Dendritic cell treated with granulocyte-macrophage colony-stimulating factor and Interleukin-4, amounts not matched to agents 40 ng/mL and 50 ng/mL, for 4 days (primary cell): ENCODE measurements at regions of chr15 and their contacts with region 1.

Region 1: GRCh38 chr15:63668601-63669000 is 71.4 kb downstream of the FBXL22 start:
- H3K4me3 Mint-ChIP-seq: peak overlapping the region; percentile 53
- H3K27ac Mint-ChIP-seq: peak overlapping the region; percentile 81
- H3K4me1 Mint-ChIP-seq: peaks cover 17% of the 10 kb centered on the region
- H3K27me3 Mint-ChIP-seq: no peaks in the 10 kb centered on the region

Region 2: GRCh38 chr15:63107895-63108546 is 560.6 kb before region 1 on chr15:
- intact Hi-C with region 1: no loop called
- H3K4me3 Mint-ChIP-seq: no peak overlapping the region
- H3K27ac Mint-ChIP-seq: no peak overlapping the region
- H3K4me1 Mint-ChIP-seq: peaks cover 27% of the 10 kb centered on the region
- H3K27me3 Mint-ChIP-seq: peaks cover 4% of the 10 kb centered on the region

Region 3: GRCh38 chr15:63729115-63729884 is 60.7 kb after region 1 on chr15:
- intact Hi-C with region 1: loop called (anchors 10 kb)
- H3K4me3 Mint-ChIP-seq: no peak overlapping the region
- H3K27ac Mint-ChIP-seq: no peak overlapping the region
- H3K4me1 Mint-ChIP-seq: no peaks in the 10 kb centered on the region
- H3K27me3 Mint-ChIP-seq: no peaks in the 10 kb centered on the region

Region 4: DNA sequence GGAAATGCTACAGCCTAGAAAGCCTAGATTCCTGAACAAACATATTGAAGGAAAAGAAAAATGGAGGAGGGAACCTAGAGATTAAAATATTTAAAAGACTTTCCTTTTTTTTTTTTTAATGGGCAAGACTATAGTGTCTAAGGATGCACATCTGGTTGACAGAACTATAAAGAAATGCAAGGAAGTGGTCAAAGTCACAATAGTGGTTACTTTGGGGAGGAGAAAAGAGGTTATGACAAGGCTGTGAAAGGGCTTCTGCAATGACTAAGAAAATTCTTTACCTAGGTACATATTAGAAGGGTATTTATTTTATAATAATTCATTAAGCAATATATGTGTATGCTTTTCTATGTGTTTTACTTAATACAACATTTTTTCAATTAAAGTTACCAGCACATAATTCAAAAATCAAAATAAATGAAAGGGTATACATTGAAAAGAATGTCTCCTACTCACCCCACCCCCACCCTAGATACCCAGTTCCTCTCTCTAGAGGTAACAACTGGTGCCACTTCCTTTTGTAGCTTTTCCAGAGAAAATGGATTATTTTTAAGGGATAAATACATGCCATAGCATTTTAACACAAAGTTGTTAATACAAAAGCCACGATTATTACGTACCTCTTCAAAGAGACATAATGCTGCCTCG is 95.0 kb after region 1 on chr15:
- intact Hi-C with region 1: no loop called
- H3K4me3 Mint-ChIP-seq: no peak overlapping the region
- H3K27ac Mint-ChIP-seq: peak overlapping the region; percentile 50
- H3K4me1 Mint-ChIP-seq: peaks cover 35% of the 10 kb centered on the region
- H3K27me3 Mint-ChIP-seq: no peaks in the 10 kb centered on the region

Region 5: DNA sequence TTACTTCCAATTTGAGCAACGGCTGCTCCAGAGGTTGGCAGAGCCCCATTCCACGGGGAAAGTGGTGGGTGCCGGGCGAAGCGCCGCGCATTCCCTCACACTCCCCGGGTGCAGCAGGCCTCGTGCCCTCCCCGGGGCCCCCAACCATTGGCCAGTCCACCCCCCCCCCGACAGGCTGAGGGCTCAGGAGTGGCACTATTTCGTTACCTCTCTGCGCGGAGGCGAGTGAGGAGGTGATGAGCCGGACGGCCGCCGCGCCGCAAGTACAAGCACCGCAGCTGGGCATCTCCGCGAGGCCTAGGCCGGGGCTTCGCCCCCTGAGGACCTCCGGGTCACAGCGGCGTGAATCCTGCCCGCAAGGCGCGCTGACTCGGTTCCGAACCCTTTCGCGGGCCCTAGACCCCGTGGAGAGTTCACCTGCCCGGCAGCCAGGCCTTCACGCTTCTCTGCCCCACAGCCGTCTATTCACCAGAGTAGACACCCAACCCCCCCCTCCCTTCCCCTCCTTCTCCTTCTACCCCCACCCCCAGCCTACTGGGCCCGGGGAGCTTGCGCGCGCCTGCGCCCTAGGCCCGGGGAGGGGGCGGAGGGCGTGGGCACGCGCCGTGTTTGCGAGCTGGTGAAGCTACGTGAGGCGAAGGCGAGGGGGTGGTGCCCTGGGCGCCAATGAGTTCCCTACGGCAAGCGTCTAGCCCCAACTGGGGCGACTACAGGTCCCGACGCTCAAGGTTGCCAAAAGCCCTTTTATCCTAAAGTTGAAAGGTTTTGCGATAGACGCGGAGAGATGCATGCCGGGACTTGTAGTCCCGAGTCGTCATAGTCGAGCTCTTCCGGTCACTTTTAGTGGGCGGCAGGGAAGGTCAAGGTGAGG is 1516.5 kb after region 1 on chr15 and contains the start of gene CLPX:
- intact Hi-C with region 1: no loop called
- H3K4me3 Mint-ChIP-seq: peak within 1 kb of the TSS; percentile 92
- H3K27ac Mint-ChIP-seq: peak within 1 kb of the TSS; percentile 94
- H3K4me1 Mint-ChIP-seq: peaks cover 24% of the 10 kb centered on the region
- H3K27me3 Mint-ChIP-seq: no peaks in the 10 kb centered on the region